GM10248 (cell line): ENCODE measurements at regions of chr10 and their contacts with region 1.

Region 1: DNA sequence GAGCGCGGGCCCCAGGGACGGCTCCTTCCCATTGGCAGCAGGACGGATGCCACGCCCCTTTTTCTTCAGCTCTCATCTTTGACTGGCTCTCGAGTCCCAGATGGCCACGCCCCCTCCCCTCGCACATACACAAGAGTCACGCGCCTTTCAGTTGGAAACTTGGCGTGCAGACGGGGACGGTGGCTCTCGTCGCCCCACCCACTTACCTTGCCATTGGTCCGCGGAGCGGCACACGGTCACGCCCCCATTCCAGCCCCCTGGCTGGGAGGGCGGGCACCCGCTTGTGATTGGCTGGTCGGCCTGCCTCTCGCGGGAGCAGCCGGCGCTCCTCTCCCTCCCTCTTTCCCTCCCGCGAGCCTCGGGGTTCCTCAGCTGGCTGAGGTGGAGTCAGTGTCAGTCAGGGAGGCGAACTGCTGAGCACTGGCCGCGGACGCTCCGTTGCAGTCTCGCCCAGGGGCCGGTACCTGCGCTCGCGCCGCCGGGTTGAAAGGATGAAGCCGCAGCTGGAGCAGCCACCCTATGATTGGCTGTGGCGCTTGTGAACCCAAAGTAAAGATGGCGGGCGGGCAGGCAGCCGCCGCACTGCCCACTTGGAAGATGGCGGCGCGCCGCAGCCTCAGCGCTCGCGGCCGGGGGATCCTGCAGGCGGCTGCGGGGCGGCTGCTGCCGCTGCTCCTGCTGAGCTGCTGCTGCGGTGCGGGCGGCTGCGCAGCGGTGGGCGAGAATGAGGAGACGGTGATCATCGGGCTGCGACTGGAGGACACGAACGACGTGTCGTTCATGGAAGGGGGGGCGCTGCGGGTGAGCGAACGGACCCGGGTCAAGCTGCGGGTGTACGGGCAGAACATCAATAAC is at the start of gene CNNM2:
- DNase-seq: peak; percentile 98
- CTCF ChIP-seq: no peak

Region 2: GRCh38 chr10:102951316-102951715 is 33.1 kb after region 1 on chr10:
- CTCF ChIA-PET with region 1: no interaction called
- POLR2A ChIA-PET with region 1: no interaction called
- DNase-seq: no peak
- CTCF ChIP-seq: no peak

Region 3: GRCh38 chr10:103062604-103063590 is 144.7 kb after region 1 on chr10:
- CTCF ChIA-PET with region 1: interaction called, 67 read pairs
- POLR2A ChIA-PET with region 1: interaction called, 3 read pairs
- DNase-seq: no peak
- CTCF ChIP-seq: no peak

Region 4: GRCh38 chr10:103080891-103081581 is 162.8 kb after region 1 on chr10:
- CTCF ChIA-PET with region 1: interaction called, 10 read pairs
- POLR2A ChIA-PET with region 1: no interaction called
- DNase-seq: no peak
- CTCF ChIP-seq: no peak

Region 5: GRCh38 chr10:103244663-103245271 is 326.6 kb after region 1 on chr10:
- CTCF ChIA-PET with region 1: interaction called, 55 read pairs
- POLR2A ChIA-PET with region 1: no interaction called
- DNase-seq: peak; percentile 83
- CTCF ChIP-seq: peak; percentile 94